ENCODE measurements at regions of chr3 and their contacts with region 1.

Region 1: DNA sequence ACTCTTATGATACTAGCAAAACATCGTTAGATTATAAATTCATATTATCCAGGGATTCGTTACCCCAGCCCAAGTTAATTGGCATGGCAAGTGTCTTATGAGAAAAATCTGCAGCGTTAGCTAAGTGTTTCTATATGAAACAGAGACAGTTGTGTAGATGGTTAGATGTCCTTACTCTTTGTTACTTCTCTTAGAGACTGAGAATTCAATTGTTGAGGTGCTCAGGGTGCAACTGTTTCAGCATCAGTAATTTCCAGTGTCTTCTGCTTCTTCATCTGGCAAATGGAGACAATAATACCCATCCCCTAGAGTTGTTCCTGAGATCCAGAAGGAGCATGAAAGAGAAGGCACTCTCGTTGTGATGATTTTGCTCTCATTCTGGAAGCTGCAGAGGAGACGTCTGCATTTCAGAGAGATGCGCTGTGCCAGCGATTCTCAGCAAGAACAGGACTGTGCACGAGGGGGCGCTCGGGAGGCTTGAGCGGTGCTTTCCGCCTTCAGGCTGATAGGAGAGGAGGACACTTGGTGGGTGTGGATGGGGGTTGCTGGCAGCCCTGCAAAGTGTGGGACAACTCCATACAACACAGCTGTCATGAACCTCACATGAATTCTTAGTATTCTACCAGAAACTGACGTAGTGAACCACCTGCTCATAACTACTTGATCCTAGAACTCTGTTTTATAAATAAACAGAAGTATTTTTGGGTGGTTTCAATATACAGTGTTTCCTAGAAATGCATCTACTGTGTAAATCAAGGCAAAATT is 39.7 kb upstream of the SPSB4 start:
- DNase-seq: peak; percentile 44
- ATAC-seq: peak; percentile 95
- H3K4me3 ChIP-seq: no peak overlapping the region
- H3K27ac ChIP-seq: no peak overlapping the region
- H3K4me1 ChIP-seq: no peaks in the 10 kb centered on the region
- H3K27me3 ChIP-seq: peaks cover 7% of the 10 kb centered on the region
- CTCF ChIP-seq: peak; percentile 74
- POLR2A ChIP-seq: no peak
- RAD21 ChIP-seq: peak; percentile 59

Region 2: GRCh38 chr3:141000027-141000663 is 11.3 kb before region 1 on chr3:
- CTCF ChIA-PET with region 1: interaction called, 16 read pairs
- POLR2A ChIA-PET with region 1: no interaction called
- dilution Hi-C with region 1: no loop called
- in situ Hi-C with region 1: no loop called
- intact Hi-C with region 1: no loop called
- DNase-seq: peak; percentile 42
- ATAC-seq: peak; percentile 100
- H3K4me3 ChIP-seq: no peak overlapping the region
- H3K27ac ChIP-seq: no peak overlapping the region
- H3K4me1 ChIP-seq: no peaks in the 10 kb centered on the region
- H3K27me3 ChIP-seq: peaks cover 5% of the 10 kb centered on the region
- CTCF ChIP-seq: peak; percentile 70
- POLR2A ChIP-seq: no peak
- RAD21 ChIP-seq: peak; percentile 75

Measured in IMR-90 (cell line).